K562 (cell line): ENCODE measurements at regions of chr4 and their contacts with region 1.

Region 1: GRCh38 chr4:123396307-123397143 is at the start of gene SPRY1:
- DNase-seq: peak; percentile 49 to 82 (median 58)
- ATAC-seq: peak; percentile 83
- H3K4me3 ChIP-seq: peak within 1 kb of the TSS; percentile 36
- H3K27ac ChIP-seq: peak within 1 kb of the TSS; percentile 18; the same call in 1 of the 3 replicates
- H3K4me1 ChIP-seq: peaks cover 2 to 19% of the 10 kb centered on the region in 2 experiments; a peak in 3 of 5 replicates
- H3K27me3 ChIP-seq: peaks cover 0 to 8% of the 10 kb centered on the region in 2 experiments; a peak in 1 of 5 replicates
- CTCF ChIP-seq: no peak
- EP300 ChIP-seq: no peak
- POLR2A ChIP-seq: no peak
- RAD21 ChIP-seq: no peak
- polyA plus RNA-seq, gene SPRY1: 0.18 TPM in 1 of 2 experiments, not detected in the other

Region 2: GRCh38 chr4:123182289-123182688 is 214.2 kb before region 1 on chr4:
- CTCF ChIA-PET with region 1: no interaction called
- POLR2A ChIA-PET with region 1: no interaction called
- in situ Hi-C with region 1: no loop called
- intact Hi-C with region 1: no loop called
- DNase-seq: peak in 2 of 4 experiments; percentile 28 to 29
- ATAC-seq: peak; percentile 77
- H3K4me3 ChIP-seq: no peak overlapping the region
- H3K27ac ChIP-seq: no peak overlapping the region
- H3K4me1 ChIP-seq: peaks cover 0 to 3% of the 10 kb centered on the region in 2 experiments; a peak in 2 of 5 replicates
- H3K27me3 ChIP-seq: no peaks in the 10 kb centered on the region
- CTCF ChIP-seq: no peak
- EP300 ChIP-seq: no peak
- POLR2A ChIP-seq: no peak
- RAD21 ChIP-seq: no peak

Region 3: GRCh38 chr4:123380728-123381716 is 15.5 kb before region 1 on chr4:
- CTCF ChIA-PET with region 1: no interaction called
- POLR2A ChIA-PET with region 1: no interaction called
- in situ Hi-C with region 1: no loop called
- intact Hi-C with region 1: no loop called
- DNase-seq: no peak
- ATAC-seq: no peak
- H3K4me3 ChIP-seq: no peak overlapping the region
- H3K27ac ChIP-seq: no peak overlapping the region
- H3K4me1 ChIP-seq: no peaks in the 10 kb centered on the region
- H3K27me3 ChIP-seq: no peaks in the 10 kb centered on the region
- CTCF ChIP-seq: no peak
- EP300 ChIP-seq: no peak
- POLR2A ChIP-seq: no peak
- RAD21 ChIP-seq: no peak

Region 4: GRCh38 chr4:123444290-123444731 is 47.8 kb after region 1 on chr4:
- CTCF ChIA-PET with region 1: no interaction called
- POLR2A ChIA-PET with region 1: no interaction called
- in situ Hi-C with region 1: no loop called
- intact Hi-C with region 1: loop called (anchors 5 kb)
- DNase-seq: peak; percentile 39 to 72 (median 58)
- ATAC-seq: peak; percentile 95
- H3K4me3 ChIP-seq: no peak overlapping the region
- H3K27ac ChIP-seq: peak overlapping the region; percentile 54
- H3K4me1 ChIP-seq: peaks cover 0 to 8% of the 10 kb centered on the region in 2 experiments; a peak in 4 of 5 replicates
- H3K27me3 ChIP-seq: no peaks in the 10 kb centered on the region
- CTCF ChIP-seq: no peak
- EP300 ChIP-seq: peak; percentile 59; the same call in 1 of the 2 replicates
- POLR2A ChIP-seq: no peak
- RAD21 ChIP-seq: no peak